CD14-positive monocyte (primary cell): ENCODE measurements at regions of chr14 and their contacts with region 1.

Region 1: DNA sequence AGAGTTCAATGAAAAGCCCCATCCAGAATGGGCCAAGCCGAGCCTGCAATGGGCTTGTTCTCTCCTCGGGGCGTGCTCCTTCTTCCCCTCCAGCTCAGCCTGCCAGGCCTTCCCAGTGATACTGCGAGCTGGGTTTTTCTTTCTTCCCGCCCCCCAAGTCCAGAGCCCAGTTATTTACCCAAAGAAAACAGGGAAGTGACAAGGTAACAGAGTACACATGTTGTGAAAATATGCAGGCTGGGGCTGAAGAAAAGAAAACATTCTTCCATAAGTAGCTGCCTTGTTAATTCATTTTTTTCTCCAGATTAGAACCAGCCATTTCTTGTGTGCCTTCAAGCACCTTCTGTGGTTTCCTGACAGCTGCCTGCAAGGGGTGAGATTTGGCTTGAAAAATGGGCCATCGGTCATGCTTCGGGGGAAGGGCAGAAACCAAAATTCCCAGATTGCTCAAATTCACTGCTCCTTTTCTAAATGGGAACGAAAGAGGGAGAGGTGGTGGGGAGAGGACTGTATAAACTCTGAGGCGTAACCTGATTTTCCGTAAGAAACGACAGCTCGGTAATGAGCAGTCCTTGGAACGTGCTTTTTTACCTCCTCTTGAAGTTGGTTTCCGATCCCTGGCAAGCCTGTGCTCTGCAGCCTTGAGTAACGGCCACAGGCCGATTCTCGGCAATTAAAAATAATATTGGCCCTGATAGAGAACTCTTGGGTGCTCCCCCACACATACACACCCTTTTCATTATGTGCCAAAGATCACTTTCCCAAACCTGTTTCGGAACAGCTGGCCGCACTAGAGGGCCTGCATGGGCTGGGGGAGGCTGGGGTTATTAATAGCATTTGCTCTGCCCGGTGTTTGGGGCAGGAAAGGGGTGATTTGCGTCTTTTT is 229.4 kb downstream of the ZFP36L1 start:
- DNase-seq: peak in 1 of 3 donors; percentile 52
- H3K4me3 ChIP-seq: no peak overlapping the region
- H3K4me3 Mint-ChIP-seq: peak overlapping the region in 1 of 2 donors; percentile 14
- H3K27ac ChIP-seq: no peak overlapping the region
- H3K27ac Mint-ChIP-seq: peak overlapping the region in 1 of 7 donors; percentile 50
- H3K4me1 ChIP-seq: peaks cover 23 to 27% of the 10 kb centered on the region in 2 donors
- H3K4me1 Mint-ChIP-seq: peaks cover 25% of the 10 kb centered on the region
- H3K27me3 ChIP-seq: peaks cover 0 to 3% of the 10 kb centered on the region in 2 donors
- H3K27me3 Mint-ChIP-seq: peaks cover 2 to 9% (median 4%) of the 10 kb centered on the region in 3 donors
- CTCF ChIP-seq: no peak

Region 2: GRCh38 chr14:68268197-68268596 is 295.3 kb before region 1 on chr14:
- intact Hi-C with region 1: loop called in 1 of 2 experiments (anchors 10 kb)
- DNase-seq: peak; percentile 87 to 96 (median 93)
- H3K4me3 ChIP-seq: peak overlapping the region in 1 of 3 experiments; percentile 46
- H3K4me3 Mint-ChIP-seq: peak overlapping the region in 1 of 2 donors; percentile 8
- H3K27ac ChIP-seq: peak overlapping the region; percentile 0 to 90
- H3K27ac Mint-ChIP-seq: peak overlapping the region; percentile 85 to 95 (median 92)
- H3K4me1 ChIP-seq: peaks cover 63 to 73% of the 10 kb centered on the region in 2 donors
- H3K4me1 Mint-ChIP-seq: peaks cover 63% of the 10 kb centered on the region
- H3K27me3 ChIP-seq: no peaks in the 10 kb centered on the region
- H3K27me3 Mint-ChIP-seq: peaks cover 0 to 6% (median 0%) of the 10 kb centered on the region in 3 donors
- CTCF ChIP-seq: no peak

Region 3: DNA sequence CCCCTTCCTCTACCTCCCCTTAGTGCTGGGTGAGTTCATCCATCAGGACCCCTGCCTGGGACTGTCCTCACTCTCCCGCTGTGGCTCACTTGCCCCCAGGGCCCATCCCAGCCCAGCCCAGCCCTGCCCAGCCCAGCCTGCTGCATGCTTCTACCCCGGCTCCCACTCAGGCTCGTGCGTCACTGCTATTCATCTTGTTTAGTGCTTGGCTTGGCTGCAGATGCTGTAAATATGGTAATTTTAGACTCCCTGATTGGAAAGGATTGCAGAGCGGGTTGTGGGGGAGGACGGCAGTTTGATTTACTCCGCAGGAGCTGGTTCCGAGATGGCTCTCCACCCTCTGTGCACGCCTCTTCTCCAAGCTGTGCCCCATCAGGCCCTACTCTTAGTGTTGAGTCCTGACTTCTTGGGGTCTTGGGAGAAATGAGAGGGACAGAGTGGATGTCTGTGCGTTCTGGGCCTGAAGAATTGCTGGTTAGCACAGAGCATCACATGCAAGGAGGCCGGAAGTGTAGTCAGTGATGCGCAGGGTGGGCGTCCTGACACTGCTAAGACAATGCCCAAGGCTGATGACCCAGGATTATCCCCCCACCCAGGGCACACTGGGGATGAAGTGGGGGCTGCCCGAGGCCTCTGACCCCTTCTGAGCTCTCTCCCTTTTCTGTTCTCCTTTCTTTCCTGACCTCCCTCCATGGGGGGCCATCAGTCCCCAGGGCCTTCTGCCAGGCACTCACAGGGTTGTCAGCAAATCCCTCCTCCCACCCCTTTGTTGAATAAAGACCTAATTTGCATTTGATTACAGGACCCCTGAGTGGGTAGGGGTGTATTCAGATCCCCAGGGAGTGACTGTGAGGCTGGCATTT is 15.1 kb before region 1 on chr14:
- intact Hi-C with region 1: no loop called
- DNase-seq: no peak
- H3K4me3 ChIP-seq: no peak overlapping the region
- H3K4me3 Mint-ChIP-seq: no peak overlapping the region
- H3K27ac ChIP-seq: no peak overlapping the region
- H3K27ac Mint-ChIP-seq: peak overlapping the region in 1 of 7 donors; percentile 44
- H3K4me1 ChIP-seq: peaks cover 16 to 31% of the 10 kb centered on the region in 2 donors
- H3K4me1 Mint-ChIP-seq: peaks cover 34% of the 10 kb centered on the region
- H3K27me3 ChIP-seq: no peaks in the 10 kb centered on the region
- H3K27me3 Mint-ChIP-seq: peaks cover 0 to 3% (median 1%) of the 10 kb centered on the region in 3 donors
- CTCF ChIP-seq: no peak

Region 4: GRCh38 chr14:68619816-68620574 is 56.5 kb after region 1 on chr14:
- intact Hi-C with region 1: loop called in 1 of 2 experiments (anchors 10 kb)
- DNase-seq: no peak
- H3K4me3 ChIP-seq: no peak overlapping the region
- H3K4me3 Mint-ChIP-seq: no peak overlapping the region
- H3K27ac ChIP-seq: no peak overlapping the region
- H3K27ac Mint-ChIP-seq: peak overlapping the region in 2 of 7 donors; percentile 57 to 66
- H3K4me1 ChIP-seq: peaks cover 10 to 11% of the 10 kb centered on the region in 2 donors
- H3K4me1 Mint-ChIP-seq: peaks cover 14% of the 10 kb centered on the region
- H3K27me3 ChIP-seq: no peaks in the 10 kb centered on the region
- H3K27me3 Mint-ChIP-seq: peaks cover 0 to 4% (median 0%) of the 10 kb centered on the region in 3 donors
- CTCF ChIP-seq: no peak